SK-N-SH (cell line): ENCODE measurements at regions of chr2 and their contacts with region 1.

Region 1: GRCh38 chr2:219543601-219544358 is at the starts of genes CHPF and TMEM198:
- DNase-seq: peak; percentile 100
- H3K4me3 ChIP-seq: peak within 1 kb of the TSS; percentile 62 to 86
- H3K27ac ChIP-seq: peak within 1 kb of the TSS; percentile 73 to 77
- H3K4me1 ChIP-seq: peaks cover 7 to 30% of the 10 kb centered on the region in 2 experiments; a peak in 2 of 4 replicates
- H3K27me3 ChIP-seq: no peaks in the 10 kb centered on the region
- CTCF ChIP-seq: no peak
- EP300 ChIP-seq: no peak
- RAD21 ChIP-seq: no peak
- polyA plus RNA-seq, gene CHPF: 119 and 141 TPM in 2 replicates
- polyA plus RNA-seq, gene TMEM198: 4.7 and 7.0 TPM in 2 replicates

Region 2: GRCh38 chr2:219530048-219530963 is 13.5 kb before region 1 on chr2:
- CTCF ChIA-PET with region 1: interaction called, 168 read pairs
- POLR2A ChIA-PET with region 1: interaction called, 3 read pairs
- DNase-seq: peak; percentile 93
- H3K4me3 ChIP-seq: peak overlapping the region; percentile 28 to 36; a peak in 3 of 4 replicates
- H3K27ac ChIP-seq: peak overlapping the region in 1 of 2 experiments; percentile 12; a peak in 1 of 4 replicates
- H3K4me1 ChIP-seq: peaks cover 0 to 38% of the 10 kb centered on the region in 2 experiments; a peak in 2 of 4 replicates
- H3K27me3 ChIP-seq: no peaks in the 10 kb centered on the region; the same call in 1 of the 2 replicates
- CTCF ChIP-seq: peak; percentile 91
- EP300 ChIP-seq: no peak
- RAD21 ChIP-seq: peak; percentile 99

Region 3: DNA sequence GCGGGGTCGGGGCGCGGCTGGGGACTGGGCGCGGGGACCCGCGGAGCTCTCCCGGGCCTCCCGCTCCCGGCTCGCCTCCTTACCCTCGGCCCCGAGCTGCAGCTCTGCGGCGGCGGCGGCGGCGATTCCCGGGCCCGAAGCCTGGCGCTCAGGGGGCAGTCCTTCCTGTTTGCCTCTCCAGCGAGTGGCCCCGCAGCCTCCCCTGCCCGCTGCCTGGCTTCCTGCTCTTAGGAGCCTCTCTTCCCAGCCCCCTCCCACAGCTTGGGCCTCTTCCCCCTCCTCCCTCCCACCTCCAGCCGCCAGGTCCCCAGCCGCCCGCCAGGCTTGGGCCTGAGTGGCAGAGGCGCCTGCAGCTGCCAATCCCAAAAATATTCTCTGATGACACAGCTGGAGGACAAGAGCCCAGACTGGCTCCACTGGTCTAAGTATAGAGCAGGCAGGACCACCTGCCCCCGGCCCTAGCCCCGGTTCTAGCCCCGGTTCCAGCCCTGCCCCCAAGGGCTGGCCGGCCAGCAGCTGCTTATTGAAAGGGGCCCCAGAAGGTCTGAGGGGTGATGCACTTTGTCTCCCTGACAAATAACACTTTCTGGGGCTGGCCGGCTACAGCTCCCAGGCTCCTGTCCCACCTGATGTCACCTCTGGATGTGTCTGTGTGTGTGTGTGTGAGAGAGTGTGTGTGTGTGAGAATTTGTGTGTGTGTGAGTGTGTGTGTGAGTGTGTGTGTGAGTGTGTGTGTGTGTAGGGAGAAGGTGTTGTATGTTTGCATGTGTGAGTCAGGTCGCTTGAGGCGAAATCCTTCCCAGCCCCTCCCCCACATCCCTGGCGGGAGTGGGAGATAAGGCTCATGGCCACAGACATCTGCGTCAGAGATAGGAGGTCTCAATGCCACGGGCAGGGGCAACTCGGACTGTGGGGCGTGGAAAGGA is 27.8 kb after region 1 on chr2 and contains the start of gene OBSL1:
- CTCF ChIA-PET with region 1: interaction called, 19 read pairs
- POLR2A ChIA-PET with region 1: interaction called, 11 read pairs
- DNase-seq: peak; percentile 97
- H3K4me3 ChIP-seq: peak within 1 kb of the TSS; percentile 65 to 82
- H3K27ac ChIP-seq: peak within 1 kb of the TSS; percentile 36 to 76
- H3K4me1 ChIP-seq: peaks cover 3 to 21% of the 10 kb centered on the region in 2 experiments; a peak in 1 of 4 replicates
- H3K27me3 ChIP-seq: no peaks in the 10 kb centered on the region
- CTCF ChIP-seq: no peak
- EP300 ChIP-seq: peak in 1 of 2 experiments; percentile 55; a peak in 1 of 4 replicates
- RAD21 ChIP-seq: no peak; the same call in 1 of the 2 replicates
- polyA plus RNA-seq, gene OBSL1: 70.9 and 93.0 TPM in 2 replicates

Region 4: DNA sequence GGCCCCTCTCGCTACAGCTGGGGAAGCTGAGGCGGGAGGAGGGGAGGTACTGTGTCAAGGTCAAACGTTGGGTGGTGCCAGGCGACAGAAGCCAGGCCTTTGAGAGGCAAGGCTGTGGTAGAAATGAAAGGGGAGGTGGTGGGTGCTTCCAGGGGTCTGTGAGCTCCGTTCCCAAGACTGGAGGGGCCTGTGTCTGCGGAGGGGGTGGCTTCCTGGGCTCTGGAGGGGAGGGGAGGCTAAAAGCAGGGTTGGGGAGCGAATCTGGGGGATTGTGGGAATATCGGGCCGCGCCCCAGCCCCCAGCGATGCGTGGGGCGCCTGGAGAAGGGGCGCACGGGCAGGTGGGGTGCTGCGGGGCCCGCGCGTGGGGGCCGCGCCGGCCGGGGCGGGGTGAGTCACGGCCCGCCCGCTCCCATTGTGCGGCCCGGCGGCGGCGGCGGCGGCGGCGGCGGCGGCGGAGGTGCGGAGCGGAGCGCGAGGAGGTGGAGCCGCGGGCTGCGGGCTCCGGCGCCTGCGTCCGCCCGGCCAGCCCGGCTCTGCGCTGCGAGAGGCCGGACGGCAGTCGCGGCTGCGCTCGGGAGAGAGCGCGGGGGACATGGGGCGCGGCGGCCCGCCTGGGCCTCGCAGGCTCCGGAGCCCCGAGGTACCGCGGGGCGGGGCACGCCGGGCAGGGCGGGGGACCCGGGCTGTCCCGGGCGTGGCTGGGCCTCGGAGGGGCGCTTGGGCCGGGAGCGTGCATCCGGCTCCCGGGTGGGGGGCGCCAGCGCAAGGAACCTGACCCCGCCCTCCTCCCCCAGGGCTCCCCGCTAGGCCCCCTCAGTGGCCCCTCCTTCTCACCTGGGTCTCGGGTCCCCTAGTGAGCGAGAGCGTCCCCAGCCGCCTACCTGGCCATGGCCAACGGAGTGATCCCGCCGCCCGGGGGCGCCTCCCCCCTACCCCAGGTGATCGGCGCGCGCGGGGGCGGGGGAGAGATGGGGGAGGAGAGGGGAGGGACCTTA is 83.6 kb after region 1 on chr2 and contains the start of gene SLC4A3:
- CTCF ChIA-PET with region 1: interaction called, 23 read pairs
- POLR2A ChIA-PET with region 1: no interaction called
- DNase-seq: peak; percentile 94
- H3K4me3 ChIP-seq: peak within 1 kb of the TSS; percentile 64 to 68
- H3K27ac ChIP-seq: peak within 1 kb of the TSS in 1 of 2 experiments; percentile 68; a peak in 1 of 4 replicates
- H3K4me1 ChIP-seq: peaks cover 0 to 13% of the 10 kb centered on the region in 2 experiments; a peak in 1 of 4 replicates
- H3K27me3 ChIP-seq: no peaks in the 10 kb centered on the region
- CTCF ChIP-seq: 0 out of 2 replicates have a peak, but pooled peaks have one; percentile 14
- EP300 ChIP-seq: no peak
- RAD21 ChIP-seq: no peak
- polyA plus RNA-seq, gene SLC4A3: 12.2 and 12.3 TPM in 2 replicates

Region 5: GRCh38 chr2:219650426-219651248 is 106.9 kb after region 1 on chr2:
- CTCF ChIA-PET with region 1: interaction called, 95 read pairs
- POLR2A ChIA-PET with region 1: no interaction called
- DNase-seq: no peak
- H3K4me3 ChIP-seq: no peak overlapping the region
- H3K27ac ChIP-seq: no peak overlapping the region
- H3K4me1 ChIP-seq: peaks cover 4 to 5% of the 10 kb centered on the region in 2 experiments; a peak in 2 of 4 replicates
- H3K27me3 ChIP-seq: peaks cover 14% of the 10 kb centered on the region
- CTCF ChIP-seq: no peak
- EP300 ChIP-seq: no peak
- RAD21 ChIP-seq: no peak

Region 6: DNA sequence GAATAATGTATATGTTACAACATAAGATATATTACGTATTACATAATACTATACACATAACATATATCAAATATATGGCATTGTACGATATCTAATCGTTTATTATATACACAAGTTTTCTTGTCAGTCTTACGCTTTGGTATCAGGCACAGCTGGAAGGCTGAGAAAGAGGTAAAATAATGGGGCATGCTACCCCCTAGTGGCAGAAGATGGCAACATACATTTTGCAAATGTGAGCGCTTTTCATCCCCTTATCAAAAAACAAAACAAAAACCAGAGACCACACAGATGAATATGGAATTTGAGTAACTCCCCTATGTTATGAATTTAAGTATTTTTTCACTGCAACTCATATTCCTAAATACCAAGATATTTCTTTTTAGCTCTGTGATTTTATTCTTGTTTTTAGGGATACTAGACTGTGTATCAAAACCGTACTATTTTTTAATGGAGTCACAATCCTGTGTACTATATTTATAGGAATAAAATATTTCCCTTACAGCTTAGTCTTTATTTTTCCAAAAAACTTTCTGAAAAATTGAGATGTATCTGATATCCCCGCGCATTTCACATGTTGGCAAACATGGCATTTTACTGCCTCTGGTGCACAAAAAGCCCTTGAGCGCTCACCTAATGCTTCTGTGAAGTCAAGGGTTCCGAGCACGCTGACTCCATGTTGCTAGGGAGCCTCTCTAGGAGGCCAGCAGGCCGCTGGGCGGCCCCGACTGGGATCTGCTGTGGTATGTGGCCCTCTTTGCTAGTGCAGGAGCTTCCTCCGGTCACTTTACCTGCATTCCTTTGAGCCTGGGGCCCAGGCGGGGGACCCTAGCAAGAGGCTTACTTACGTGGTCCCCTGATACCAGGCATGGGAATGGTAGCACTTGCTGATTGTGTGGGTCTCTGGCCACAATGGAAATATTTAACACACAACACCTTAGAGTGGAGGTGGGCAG is 146.2 kb after region 1 on chr2:
- CTCF ChIA-PET with region 1: interaction called, 50 read pairs
- POLR2A ChIA-PET with region 1: no interaction called
- DNase-seq: peak; percentile 60
- H3K4me3 ChIP-seq: no peak overlapping the region
- H3K27ac ChIP-seq: no peak overlapping the region
- H3K4me1 ChIP-seq: peaks cover 2 to 7% of the 10 kb centered on the region in 2 experiments; a peak in 2 of 4 replicates
- H3K27me3 ChIP-seq: peaks cover 15% of the 10 kb centered on the region; the same call in 1 of the 2 replicates
- CTCF ChIP-seq: peak; percentile 79
- EP300 ChIP-seq: no peak
- RAD21 ChIP-seq: peak; percentile 80

Region 7: DNA sequence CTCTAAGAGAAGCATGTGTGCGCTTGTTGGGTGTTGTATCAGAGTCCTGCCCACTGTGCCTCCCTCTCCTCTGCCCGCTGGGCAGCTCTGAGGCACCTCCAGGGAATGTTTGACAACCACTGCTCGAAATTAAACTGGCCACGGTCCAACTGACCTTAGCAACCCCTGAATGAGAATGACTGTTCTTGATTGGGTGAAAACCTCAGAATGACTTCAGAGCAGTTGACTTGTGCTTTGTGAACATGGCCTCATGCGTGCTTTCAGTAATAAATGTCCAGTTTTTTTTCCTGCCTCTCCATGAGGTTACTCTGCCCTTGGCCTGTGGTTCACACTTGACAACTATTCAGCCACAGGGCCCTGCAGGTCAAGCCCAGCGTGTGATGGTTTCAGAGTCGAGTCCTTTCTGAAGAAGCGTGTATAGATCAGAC is 178.6 kb after region 1 on chr2:
- CTCF ChIA-PET with region 1: no interaction called
- POLR2A ChIA-PET with region 1: no interaction called
- DNase-seq: no peak
- H3K4me3 ChIP-seq: no peak overlapping the region
- H3K27ac ChIP-seq: no peak overlapping the region
- H3K4me1 ChIP-seq: no peaks in the 10 kb centered on the region
- H3K27me3 ChIP-seq: no peaks in the 10 kb centered on the region; the same call in 1 of the 2 replicates
- CTCF ChIP-seq: no peak
- EP300 ChIP-seq: no peak
- RAD21 ChIP-seq: no peak

Region 8: GRCh38 chr2:219758907-219759680 is 215.3 kb after region 1 on chr2:
- CTCF ChIA-PET with region 1: no interaction called
- POLR2A ChIA-PET with region 1: no interaction called
- DNase-seq: no peak
- H3K4me3 ChIP-seq: no peak overlapping the region
- H3K27ac ChIP-seq: no peak overlapping the region
- H3K4me1 ChIP-seq: no peaks in the 10 kb centered on the region; a peak in 1 of 4 replicates
- H3K27me3 ChIP-seq: no peaks in the 10 kb centered on the region
- CTCF ChIP-seq: no peak
- EP300 ChIP-seq: no peak
- RAD21 ChIP-seq: no peak